ENCODE measurements at regions of chr3 and their contacts with region 1.

Region 1: GRCh38 chr3:50121416-50122032 is 32.8 kb downstream of the RBM5 start:
- DNase-seq: peak; percentile 81
- H3K4me3 ChIP-seq: no peak overlapping the region
- H3K27ac ChIP-seq: no peak overlapping the region
- H3K4me1 ChIP-seq: peaks cover 0 to 21% (median 6%) of the 10 kb centered on the region in 4 donors
- H3K27me3 ChIP-seq: no peaks in the 10 kb centered on the region
- CTCF ChIP-seq: peak; percentile 84 to 93 (median 85)
- EP300 ChIP-seq: no peak
- POLR2A ChIP-seq: no peak

Region 2: DNA sequence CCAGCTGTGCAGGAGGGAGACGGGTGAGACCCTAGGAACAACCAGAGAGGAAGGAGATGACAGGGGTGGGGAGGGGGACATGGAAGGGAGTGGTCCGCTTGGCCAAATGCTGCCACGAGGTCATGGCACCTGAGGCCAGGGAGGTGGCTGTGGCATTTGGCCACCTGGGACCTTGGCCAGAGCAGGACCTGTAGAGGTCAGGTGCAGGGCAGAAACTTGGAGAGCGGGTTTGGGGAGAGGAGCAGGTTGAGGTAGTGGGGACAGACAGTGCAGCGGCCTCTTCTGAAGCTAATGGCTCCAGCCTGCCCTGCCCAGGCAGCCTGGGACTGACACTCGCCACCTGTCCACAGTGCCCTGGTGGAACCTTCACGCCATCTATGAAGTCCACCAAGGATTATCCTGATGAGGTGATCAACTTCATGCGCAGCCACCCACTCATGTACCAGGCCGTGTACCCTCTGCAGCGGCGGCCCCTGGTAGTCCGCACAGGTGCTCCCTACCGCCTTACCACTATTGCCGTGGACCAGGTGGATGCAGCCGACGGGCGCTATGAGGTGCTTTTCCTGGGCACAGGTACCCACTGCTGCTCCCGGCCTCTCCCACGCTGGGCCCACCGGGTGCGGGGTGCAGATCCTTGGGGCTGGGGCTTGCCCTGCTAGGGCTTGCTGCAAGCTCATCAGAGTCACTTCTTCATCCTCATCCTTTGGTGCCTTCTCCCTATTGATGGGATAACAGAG is 62.9 kb after region 1 on chr3:
- in situ Hi-C with region 1: loop called in 2 of 4 experiments (anchors 5 to 10 kb)
- intact Hi-C with region 1: loop called (anchors 2 kb)
- DNase-seq: no peak
- H3K4me3 ChIP-seq: no peak overlapping the region
- H3K27ac ChIP-seq: no peak overlapping the region
- H3K4me1 ChIP-seq: peaks cover 0 to 7% (median 1%) of the 10 kb centered on the region in 4 donors
- H3K27me3 ChIP-seq: no peaks in the 10 kb centered on the region
- CTCF ChIP-seq: no peak
- EP300 ChIP-seq: no peak
- POLR2A ChIP-seq: no peak

Region 3: GRCh38 chr3:50192689-50193141 is 71.2 kb after region 1 on chr3:
- in situ Hi-C with region 1: loop called in 2 of 4 experiments (anchors 10 kb)
- intact Hi-C with region 1: loop called (anchors 2 kb)
- DNase-seq: peak; percentile 78
- H3K4me3 ChIP-seq: no peak overlapping the region
- H3K27ac ChIP-seq: no peak overlapping the region
- H3K4me1 ChIP-seq: peaks cover 0 to 20% (median 15%) of the 10 kb centered on the region in 4 donors
- H3K27me3 ChIP-seq: peaks cover 40% of the 10 kb centered on the region
- CTCF ChIP-seq: peak; percentile 93 to 96 (median 93)
- EP300 ChIP-seq: no peak
- POLR2A ChIP-seq: no peak

Region 4: DNA sequence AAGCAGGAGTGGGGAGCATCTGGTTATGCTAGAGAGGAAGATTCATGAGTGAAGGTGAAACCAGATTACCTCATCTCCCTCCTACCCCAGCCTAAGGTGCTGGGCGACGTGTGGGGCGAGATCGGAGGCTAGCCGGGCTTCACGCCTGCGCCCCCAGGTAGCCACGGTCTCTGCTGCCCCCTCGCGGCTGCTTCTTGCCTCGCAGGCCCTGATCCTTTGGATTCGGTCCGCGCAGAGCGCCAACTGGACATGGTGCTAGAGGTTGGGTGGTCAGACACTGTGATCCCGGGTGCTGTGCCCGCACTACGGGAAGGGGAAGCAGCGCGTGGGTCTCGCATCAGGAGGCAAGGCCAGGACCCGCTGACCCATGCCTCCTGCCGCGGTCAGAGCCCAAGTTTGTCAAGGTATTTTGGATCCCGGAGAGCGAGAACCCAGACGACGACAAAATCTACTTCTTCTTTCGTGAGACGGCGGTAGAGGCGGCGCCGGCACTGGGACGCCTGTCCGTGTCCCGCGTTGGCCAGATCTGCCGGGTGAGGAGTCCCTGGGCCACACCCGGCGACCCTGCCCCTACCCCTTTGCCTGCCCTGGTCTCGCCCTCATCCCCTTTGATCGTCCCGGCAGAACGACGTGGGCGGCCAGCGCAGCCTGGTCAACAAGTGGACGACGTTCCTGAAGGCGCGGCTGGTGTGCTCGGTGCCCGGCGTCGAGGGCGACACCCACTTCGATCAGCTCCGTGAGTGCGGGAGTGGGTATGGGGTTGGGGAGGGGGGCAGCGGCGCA is 151.6 kb after region 1 on chr3:
- in situ Hi-C with region 1: no loop called
- intact Hi-C with region 1: loop called (anchors 10 kb)
- DNase-seq: peak; percentile 92
- H3K4me3 ChIP-seq: peak overlapping the region in 2 of 4 donors; percentile 35 to 40
- H3K27ac ChIP-seq: peak overlapping the region in 3 of 4 donors; percentile 4 to 33 (median 23)
- H3K4me1 ChIP-seq: peaks cover 19 to 54% (median 36%) of the 10 kb centered on the region in 4 donors
- H3K27me3 ChIP-seq: peaks cover 33% of the 10 kb centered on the region
- CTCF ChIP-seq: peak; percentile 98 to 100 (median 99)
- EP300 ChIP-seq: no peak
- POLR2A ChIP-seq: no peak